Activated CD4-positive, alpha-beta memory T cell treated with anti-CD3 and anti-CD28 coated beads for 36 hours (primary cell): ENCODE measurements at regions of chr1 and their contacts with region 1.

Region 1: GRCh38 chr1:89198491-89199072 is at the start of gene GBP4:
- DNase-seq: peak; percentile 60
- H3K4me3 Mint-ChIP-seq: peak within 1 kb of the TSS; percentile 88
- H3K27ac Mint-ChIP-seq: peak within 1 kb of the TSS; percentile 90
- H3K4me1 Mint-ChIP-seq: peaks cover 80% of the 10 kb centered on the region
- H3K27me3 Mint-ChIP-seq: no peaks in the 10 kb centered on the region
- total RNA-seq, gene GBP4: 26.5 to 29.9 TPM

Region 2: DNA sequence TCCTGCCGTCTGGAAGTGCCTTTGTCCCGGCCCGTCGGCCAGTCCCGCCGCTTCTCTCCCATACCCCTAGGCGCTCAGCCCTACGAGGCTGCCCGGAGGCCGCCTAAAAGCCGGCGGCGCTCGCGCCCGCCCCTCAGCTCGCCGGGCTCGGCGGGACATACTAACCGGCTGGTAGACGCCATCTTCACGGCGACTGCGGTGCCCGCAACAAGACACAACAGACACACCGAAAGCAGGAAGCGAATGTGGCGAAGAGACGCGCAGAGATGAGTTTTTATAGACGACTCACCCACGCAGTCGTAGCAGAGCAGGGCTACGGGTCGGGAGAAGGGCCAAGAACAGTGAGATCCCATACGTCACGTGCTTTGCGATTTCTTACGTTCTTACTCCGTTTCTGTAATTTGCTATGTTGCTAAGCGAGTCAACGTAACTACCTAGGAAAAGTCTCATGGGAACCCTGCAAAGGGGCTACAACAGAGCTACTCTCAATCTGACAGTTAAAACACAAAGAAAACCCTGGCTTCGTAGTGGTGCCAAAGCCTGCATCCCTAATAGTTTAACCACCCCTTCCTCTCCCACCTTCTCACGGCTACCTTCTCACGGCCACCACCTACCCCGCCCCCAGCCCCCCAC is 307.1 kb before region 1 on chr1 and contains the start of gene GTF2B:
- CTCF ChIA-PET with region 1: no interaction called
- POLR2A ChIA-PET with region 1: no interaction called
- intact Hi-C with region 1: loop called (anchors 5 kb)
- DNase-seq: peak; percentile 97
- H3K4me3 Mint-ChIP-seq: peak within 1 kb of the TSS; percentile 81
- H3K27ac Mint-ChIP-seq: peak within 1 kb of the TSS; percentile 84
- H3K4me1 Mint-ChIP-seq: peaks cover 41% of the 10 kb centered on the region
- H3K27me3 Mint-ChIP-seq: peaks cover 2% of the 10 kb centered on the region
- total RNA-seq, gene GTF2B: 34.2 to 39.4 TPM

Region 3: DNA sequence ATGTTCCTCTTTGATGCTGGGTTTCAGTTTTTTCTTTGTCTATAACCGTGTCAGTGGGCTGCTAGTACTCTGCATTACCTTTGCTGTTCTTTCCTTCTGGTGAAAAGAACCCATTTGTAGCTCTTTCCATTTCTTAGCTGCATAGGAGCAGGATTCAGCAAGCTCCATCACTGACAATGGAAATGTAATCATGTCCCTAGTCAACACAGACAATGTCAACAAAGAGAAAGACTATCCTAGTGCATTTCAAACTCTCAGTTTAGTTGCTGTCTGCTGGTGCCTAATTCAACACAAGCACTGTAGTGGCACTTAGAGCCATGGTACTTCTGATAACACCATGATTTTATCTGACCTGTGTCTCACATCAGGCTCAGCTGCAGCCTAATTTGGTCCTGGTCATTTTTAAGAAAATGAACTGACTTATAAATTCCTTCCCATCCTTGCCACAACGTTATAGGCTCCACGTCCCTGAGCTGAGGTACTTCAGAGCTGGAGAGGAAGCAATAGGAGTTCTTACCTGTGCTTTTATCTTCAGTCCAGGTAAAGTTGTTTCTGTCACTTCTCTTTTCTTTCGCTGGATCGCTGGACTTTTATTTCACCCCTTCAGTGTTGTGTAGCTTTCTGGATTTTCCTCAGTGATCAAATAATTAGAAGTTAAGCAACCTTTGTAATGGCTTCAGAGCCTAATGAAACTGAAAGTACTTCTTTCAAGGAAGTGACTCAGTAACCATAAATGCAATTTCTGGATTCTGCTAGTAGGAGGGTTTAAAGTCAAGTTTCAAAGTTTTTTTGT is 176.2 kb before region 1 on chr1 and contains the start of gene GBP3:
- CTCF ChIA-PET with region 1: no interaction called
- POLR2A ChIA-PET with region 1: no interaction called
- intact Hi-C with region 1: loop called (anchors 1 kb)
- DNase-seq: no peak
- H3K4me3 Mint-ChIP-seq: peak within 1 kb of the TSS; percentile 76
- H3K27ac Mint-ChIP-seq: peak within 1 kb of the TSS; percentile 69
- H3K4me1 Mint-ChIP-seq: peaks cover 52% of the 10 kb centered on the region
- H3K27me3 Mint-ChIP-seq: peaks cover 2% of the 10 kb centered on the region
- total RNA-seq, gene GBP3: 4.5 to 5.7 TPM

Region 4: GRCh38 chr1:89065079-89065868 is 133.3 kb before region 1 on chr1 and contains the start of gene GBP1:
- CTCF ChIA-PET with region 1: no interaction called
- POLR2A ChIA-PET with region 1: interaction called, 4 read pairs
- intact Hi-C with region 1: loop called (anchors 1 kb)
- DNase-seq: no peak
- H3K4me3 Mint-ChIP-seq: peak within 1 kb of the TSS; percentile 87
- H3K27ac Mint-ChIP-seq: peak within 1 kb of the TSS; percentile 91
- H3K4me1 Mint-ChIP-seq: peaks cover 56% of the 10 kb centered on the region
- H3K27me3 Mint-ChIP-seq: no peaks in the 10 kb centered on the region
- total RNA-seq, gene GBP1: 66.9 to 67.9 TPM

Region 5: GRCh38 chr1:89259283-89259971 is 60.8 kb after region 1 on chr1:
- CTCF ChIA-PET with region 1: no interaction called
- POLR2A ChIA-PET with region 1: no interaction called
- intact Hi-C with region 1: loop called (anchors 5 kb)
- DNase-seq: peak; percentile 76
- H3K4me3 Mint-ChIP-seq: peak overlapping the region; percentile 60
- H3K27ac Mint-ChIP-seq: peak overlapping the region; percentile 86
- H3K4me1 Mint-ChIP-seq: peaks cover 65% of the 10 kb centered on the region
- H3K27me3 Mint-ChIP-seq: no peaks in the 10 kb centered on the region

Region 6: DNA sequence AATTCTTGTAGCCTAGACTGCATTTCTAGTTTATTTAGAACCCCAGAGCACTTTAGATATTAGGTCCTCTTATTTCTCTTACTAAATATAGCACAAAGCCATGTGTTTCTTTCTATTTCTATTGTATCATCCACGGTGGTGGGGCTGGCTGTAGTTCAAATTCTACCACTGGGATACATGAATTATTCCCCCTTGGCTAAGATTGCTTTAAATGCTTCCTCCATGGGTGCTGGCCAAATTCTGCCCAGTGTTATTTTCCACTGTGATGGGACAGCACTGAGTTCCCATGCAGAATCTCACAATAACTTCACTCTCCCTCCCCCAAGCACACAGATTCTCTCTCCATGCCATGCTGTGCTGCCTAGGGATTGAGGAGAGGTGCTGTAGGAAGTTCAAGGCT is 123.8 kb after region 1 on chr1:
- CTCF ChIA-PET with region 1: no interaction called
- POLR2A ChIA-PET with region 1: no interaction called
- intact Hi-C with region 1: no loop called
- DNase-seq: no peak
- H3K4me3 Mint-ChIP-seq: no peak overlapping the region
- H3K27ac Mint-ChIP-seq: no peak overlapping the region
- H3K4me1 Mint-ChIP-seq: peaks cover 5% of the 10 kb centered on the region
- H3K27me3 Mint-ChIP-seq: no peaks in the 10 kb centered on the region

Region 7: GRCh38 chr1:89358287-89358893 is 159.8 kb after region 1 on chr1:
- CTCF ChIA-PET with region 1: interaction called, 8 read pairs
- POLR2A ChIA-PET with region 1: interaction called, 7 read pairs
- intact Hi-C with region 1: loop called (anchors 2 kb)
- DNase-seq: peak; percentile 86
- H3K4me3 Mint-ChIP-seq: peak overlapping the region; percentile 68
- H3K27ac Mint-ChIP-seq: peak overlapping the region; percentile 72
- H3K4me1 Mint-ChIP-seq: peaks cover 41% of the 10 kb centered on the region
- H3K27me3 Mint-ChIP-seq: no peaks in the 10 kb centered on the region